A673 (cell line): ENCODE measurements at regions of chr18 and their contacts with region 1.

Region 1: GRCh38 chr18:34661464-34662111 is 48.5 kb upstream of the DTNA start:
- DNase-seq: peak; percentile 72
- H3K4me3 ChIP-seq: no peak overlapping the region
- H3K27ac ChIP-seq: no peak overlapping the region
- H3K4me1 ChIP-seq: peaks cover 11% of the 10 kb centered on the region
- H3K27me3 ChIP-seq: no peaks in the 10 kb centered on the region
- CTCF ChIP-seq: peak; percentile 89

Region 2: DNA sequence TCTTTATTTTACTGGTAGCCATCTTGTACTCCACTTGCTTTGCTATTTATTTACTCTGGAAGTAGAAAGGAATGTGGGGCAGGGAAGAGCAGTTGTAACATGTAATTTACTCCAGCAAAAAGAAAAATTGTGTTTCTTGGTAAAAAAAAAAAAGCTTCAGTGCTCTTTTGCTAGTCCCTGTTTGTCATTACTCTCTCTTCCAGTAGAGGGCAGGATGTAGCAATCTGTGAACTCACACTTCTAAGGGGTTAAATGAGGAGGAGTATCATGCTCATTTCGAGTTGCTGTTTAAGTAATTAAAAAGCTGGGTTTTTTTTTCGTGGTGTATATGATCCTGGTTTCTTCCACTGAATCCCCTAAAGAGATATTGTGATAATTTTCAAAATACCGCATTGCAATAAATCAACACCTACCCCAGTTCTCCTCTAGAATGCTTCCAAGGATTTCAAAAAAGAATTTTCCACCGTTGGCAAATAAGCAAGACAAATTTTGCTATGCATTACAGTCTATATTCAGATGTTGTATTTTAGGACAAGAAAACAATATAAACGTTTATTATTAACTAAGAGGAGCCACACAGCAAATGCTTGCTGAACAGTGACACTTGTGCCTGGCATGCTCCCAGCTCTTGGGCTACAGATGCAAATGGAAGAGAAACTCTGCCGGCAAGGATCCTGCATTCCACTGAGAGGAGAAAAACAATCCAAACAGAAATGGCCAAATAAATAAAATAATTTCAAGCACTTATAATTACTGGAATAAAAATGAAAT is 822.0 kb before region 1 on chr18:
- CTCF ChIA-PET with region 1: interaction called, 3 read pairs
- POLR2A ChIA-PET with region 1: no interaction called
- intact Hi-C with region 1: loop called (anchors 10 kb)
- DNase-seq: peak; percentile 84
- H3K4me3 ChIP-seq: no peak overlapping the region
- H3K27ac ChIP-seq: no peak overlapping the region
- H3K4me1 ChIP-seq: peaks cover 18% of the 10 kb centered on the region
- H3K27me3 ChIP-seq: no peaks in the 10 kb centered on the region
- CTCF ChIP-seq: peak; percentile 87

Region 3: DNA sequence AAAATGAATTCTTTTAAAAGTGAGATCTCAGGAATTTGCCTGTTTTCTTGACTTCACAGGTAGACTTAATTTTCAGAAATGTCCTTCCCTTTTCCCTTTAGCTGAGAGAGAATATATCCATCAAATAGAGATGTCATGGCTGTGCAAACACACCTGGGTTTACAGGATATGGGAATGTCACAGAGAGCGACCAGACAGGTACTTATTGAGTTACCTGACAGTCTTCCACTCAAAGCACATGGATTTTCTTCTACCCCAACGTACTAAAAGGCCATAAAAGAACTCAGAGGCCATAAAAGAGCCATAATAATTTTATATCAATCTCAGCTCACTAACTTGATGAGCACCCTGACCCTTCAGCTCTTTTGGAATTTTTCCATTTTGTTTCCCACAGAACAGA is 43.2 kb after region 1 on chr18:
- CTCF ChIA-PET with region 1: interaction called, 6 read pairs
- POLR2A ChIA-PET with region 1: interaction called, 3 read pairs
- intact Hi-C with region 1: loop called (anchors 5 kb)
- DNase-seq: no peak
- H3K4me3 ChIP-seq: no peak overlapping the region
- H3K27ac ChIP-seq: no peak overlapping the region
- H3K4me1 ChIP-seq: peaks cover 33% of the 10 kb centered on the region
- H3K27me3 ChIP-seq: no peaks in the 10 kb centered on the region
- CTCF ChIP-seq: no peak

Region 4: DNA sequence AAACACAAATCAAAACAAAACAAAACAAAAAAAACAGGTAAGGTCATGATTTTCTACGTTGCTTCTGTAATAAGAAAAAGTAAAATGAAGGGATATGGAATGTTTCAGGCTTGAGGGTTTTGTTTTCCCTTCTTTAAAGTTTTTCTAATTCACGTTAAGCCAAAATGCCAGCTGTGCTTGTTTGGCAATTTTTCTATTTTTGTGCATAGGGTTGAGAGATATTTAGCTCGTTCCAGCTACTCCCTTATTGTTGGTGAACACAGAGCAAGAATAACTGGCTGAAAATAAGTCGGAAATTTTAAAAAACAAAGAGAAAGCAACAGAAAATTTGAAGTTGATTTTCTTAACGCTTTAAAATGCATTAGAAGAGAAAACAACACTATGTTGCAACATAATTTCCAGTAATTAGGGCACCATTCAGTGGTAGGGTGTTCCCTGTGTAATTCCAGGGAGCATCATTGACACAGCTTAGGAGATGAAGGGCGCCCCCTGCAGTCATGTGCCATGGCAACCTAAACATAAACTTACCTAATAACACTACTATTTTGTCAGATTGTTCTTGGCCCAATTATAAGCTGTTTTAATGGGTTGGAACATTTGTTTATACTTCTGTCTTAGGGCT is 148.0 kb after region 1 on chr18:
- CTCF ChIA-PET with region 1: interaction called, 13 read pairs
- POLR2A ChIA-PET with region 1: no interaction called
- intact Hi-C with region 1: no loop called
- DNase-seq: peak; percentile 79
- H3K4me3 ChIP-seq: no peak overlapping the region
- H3K27ac ChIP-seq: no peak overlapping the region
- H3K4me1 ChIP-seq: no peaks in the 10 kb centered on the region
- H3K27me3 ChIP-seq: no peaks in the 10 kb centered on the region
- CTCF ChIP-seq: peak; percentile 85